Activated CD4-positive, alpha-beta T cell treated with anti-CD3 and anti-CD28 coated beads, Interleukin-2, amount 10 ng/mL, durations not matched to agents 7 days and 5 days (primary cell): ENCODE measurements at regions of chr17 and their contacts with region 1.

Region 1: GRCh38 chr17:4433515-4434031 is at the start of gene SPNS3:
- DNase-seq: peak; percentile 53
- H3K4me3 Mint-ChIP-seq: peak within 1 kb of the TSS; percentile 25
- H3K27ac Mint-ChIP-seq: peak within 1 kb of the TSS; percentile 83
- H3K4me1 Mint-ChIP-seq: peaks cover 37% of the 10 kb centered on the region
- H3K27me3 Mint-ChIP-seq: peaks cover 1% of the 10 kb centered on the region
- total RNA-seq, gene SPNS3: 6.5 to 8.0 TPM

Region 2: GRCh38 chr17:4215882-4216570 is 217.5 kb before region 1 on chr17:
- CTCF ChIA-PET with region 1: interaction called, 12 read pairs
- POLR2A ChIA-PET with region 1: no interaction called
- DNase-seq: no peak
- H3K4me3 Mint-ChIP-seq: no peak overlapping the region
- H3K27ac Mint-ChIP-seq: peak overlapping the region; percentile 48
- H3K4me1 Mint-ChIP-seq: peaks cover 11% of the 10 kb centered on the region
- H3K27me3 Mint-ChIP-seq: no peaks in the 10 kb centered on the region

Region 3: GRCh38 chr17:4420692-4421131 is 12.9 kb before region 1 on chr17:
- CTCF ChIA-PET with region 1: interaction called, 11 read pairs
- POLR2A ChIA-PET with region 1: interaction called, 3 read pairs
- DNase-seq: peak; percentile 80
- H3K4me3 Mint-ChIP-seq: no peak overlapping the region
- H3K27ac Mint-ChIP-seq: peak overlapping the region; percentile 6
- H3K4me1 Mint-ChIP-seq: peaks cover 6% of the 10 kb centered on the region
- H3K27me3 Mint-ChIP-seq: no peaks in the 10 kb centered on the region